Left ventricle myocardium inferior (tissue), 1 donor: ENCODE measurements at regions of chr11 and their contacts with region 1.

Region 1: DNA sequence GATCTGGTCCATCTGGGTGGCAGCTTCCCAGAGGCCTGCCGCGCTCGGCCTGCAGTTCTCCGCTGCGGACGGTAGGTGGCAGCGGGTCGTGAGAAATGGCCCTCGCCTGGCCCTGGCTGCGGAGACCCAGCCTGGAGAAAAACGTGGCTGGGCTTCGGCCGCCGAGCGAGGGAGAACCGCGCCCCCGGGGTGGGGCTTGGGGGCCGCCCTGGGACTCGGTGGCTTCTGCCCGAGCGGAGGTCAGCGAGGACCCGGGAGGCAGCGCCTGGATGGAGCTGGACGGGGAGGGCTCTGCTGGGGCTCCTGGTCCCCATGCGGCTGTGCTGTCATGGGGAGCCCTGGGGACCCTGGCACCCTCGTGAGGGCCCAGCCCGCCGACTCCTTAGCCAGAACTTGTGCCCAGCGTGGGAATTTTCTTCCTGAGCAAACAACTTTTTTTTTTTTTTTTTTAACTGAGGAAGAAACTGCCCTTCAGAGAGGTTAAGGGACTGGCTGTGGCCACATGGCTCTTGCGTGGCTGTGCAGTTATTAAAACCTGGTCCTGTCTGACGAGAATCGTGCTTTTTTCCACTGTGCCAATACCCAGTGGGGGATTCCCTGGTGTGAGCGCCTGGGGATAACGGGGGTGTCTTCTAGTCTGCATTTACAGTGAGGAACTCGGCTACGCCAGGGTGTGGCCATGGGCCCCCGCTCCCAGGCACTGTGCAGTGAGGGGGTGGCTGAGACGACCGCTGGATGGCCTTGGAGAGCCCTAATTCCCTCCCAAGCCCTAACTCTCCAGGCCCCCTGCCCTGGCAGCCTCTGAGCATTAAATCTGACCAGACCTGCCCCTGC is 535.6 kb downstream of the INSC start:
- DNase-seq: peak; percentile 96
- H3K4me3 ChIP-seq: peak overlapping the region; percentile 62
- H3K27ac ChIP-seq: peak overlapping the region; percentile 84
- H3K4me1 ChIP-seq: peaks cover 20% of the 10 kb centered on the region
- H3K27me3 ChIP-seq: no peaks in the 10 kb centered on the region
- CTCF ChIP-seq: peak; percentile 99

Region 2: GRCh38 chr11:15569305-15570025 is 80.9 kb before region 1 on chr11:
- intact Hi-C with region 1: no loop called
- DNase-seq: peak; percentile 32
- H3K4me3 ChIP-seq: no peak overlapping the region
- H3K27ac ChIP-seq: peak overlapping the region; percentile 82
- H3K4me1 ChIP-seq: peaks cover 27% of the 10 kb centered on the region
- H3K27me3 ChIP-seq: no peaks in the 10 kb centered on the region
- CTCF ChIP-seq: no peak

Region 3: DNA sequence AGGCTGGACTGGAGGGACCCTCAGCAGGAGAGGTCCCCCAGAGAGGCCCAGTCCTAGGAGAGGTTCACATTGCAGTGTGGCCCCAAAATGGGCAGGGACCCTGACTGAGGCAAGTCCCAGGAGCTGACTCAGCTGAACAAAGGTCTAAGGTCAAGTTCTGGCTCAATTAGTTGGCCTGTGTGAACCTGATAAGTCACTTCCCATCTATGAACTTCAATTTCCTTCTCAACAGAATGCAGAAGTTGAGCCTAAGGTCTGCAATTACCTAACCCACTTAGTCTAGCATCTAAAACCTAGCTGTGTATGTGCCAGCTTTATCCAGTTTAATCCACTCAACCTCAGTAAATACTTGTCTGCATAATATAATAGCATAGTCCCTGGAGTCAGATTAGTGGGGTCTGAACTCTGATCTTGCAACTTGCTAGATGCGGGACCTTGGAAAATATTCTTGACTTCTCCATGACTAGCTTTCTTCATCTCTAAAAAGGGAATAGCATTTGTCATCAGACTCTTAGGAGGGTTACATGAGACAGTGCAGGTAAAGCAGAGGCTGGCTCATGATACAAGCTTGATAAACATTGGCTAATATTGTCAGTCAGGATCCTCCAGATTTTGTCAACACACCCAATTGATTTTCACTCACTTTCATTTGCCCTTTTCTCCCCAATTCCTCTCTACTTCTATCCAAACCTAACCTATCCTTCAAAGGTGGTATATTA is 70.1 kb before region 1 on chr11:
- intact Hi-C with region 1: no loop called
- DNase-seq: no peak
- H3K4me3 ChIP-seq: no peak overlapping the region
- H3K27ac ChIP-seq: no peak overlapping the region
- H3K4me1 ChIP-seq: peaks cover 12% of the 10 kb centered on the region
- H3K27me3 ChIP-seq: no peaks in the 10 kb centered on the region
- CTCF ChIP-seq: no peak

Region 4: DNA sequence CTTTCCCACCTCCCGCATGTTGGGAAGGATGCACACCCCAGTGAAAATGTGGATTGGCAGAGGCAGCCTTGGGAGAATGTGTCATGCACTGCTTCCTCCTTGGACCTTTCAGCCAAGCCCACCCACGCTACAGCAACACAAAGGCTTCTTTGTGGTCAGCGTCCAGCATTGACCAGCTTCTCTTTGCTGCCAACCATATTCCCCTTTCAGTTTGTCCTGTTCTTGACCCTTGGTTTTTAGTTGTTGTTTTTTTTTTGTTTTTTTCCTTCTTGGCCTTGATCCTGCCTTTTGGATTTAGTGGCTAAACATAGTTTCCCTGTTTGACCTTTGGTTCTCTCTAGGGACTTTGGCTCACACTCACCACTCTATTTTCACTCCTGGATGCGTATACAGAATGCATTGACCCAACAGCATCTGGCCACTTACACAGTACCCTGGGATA is 38.0 kb after region 1 on chr11:
- intact Hi-C with region 1: loop called (anchors 1 kb)
- DNase-seq: peak; percentile 69
- H3K4me3 ChIP-seq: no peak overlapping the region
- H3K27ac ChIP-seq: peak overlapping the region; percentile 64
- H3K4me1 ChIP-seq: peaks cover 17% of the 10 kb centered on the region
- H3K27me3 ChIP-seq: no peaks in the 10 kb centered on the region
- CTCF ChIP-seq: no peak

Region 5: DNA sequence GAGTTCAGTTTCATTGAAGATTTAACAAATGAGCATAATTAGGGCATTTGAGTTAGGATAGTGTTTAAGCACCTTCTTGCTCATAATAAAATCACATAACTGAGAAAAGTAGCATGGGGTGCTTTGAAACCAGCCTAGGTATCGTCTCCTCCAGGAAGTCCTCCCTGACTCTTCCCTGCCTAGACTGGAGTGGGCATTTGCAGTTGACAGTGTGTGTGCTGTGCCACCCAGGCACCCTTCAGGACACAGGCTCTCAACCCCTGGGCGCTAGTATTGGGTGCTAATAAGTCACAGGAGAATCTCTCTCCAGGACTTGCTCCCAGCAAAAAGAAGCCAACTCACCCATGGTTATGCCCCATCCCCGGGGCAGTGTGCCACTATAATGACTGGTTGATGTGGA is 48.5 kb after region 1 on chr11:
- intact Hi-C with region 1: no loop called
- DNase-seq: no peak
- H3K4me3 ChIP-seq: no peak overlapping the region
- H3K27ac ChIP-seq: no peak overlapping the region
- H3K4me1 ChIP-seq: no peaks in the 10 kb centered on the region
- H3K27me3 ChIP-seq: no peaks in the 10 kb centered on the region
- CTCF ChIP-seq: no peak

Region 6: GRCh38 chr11:16052750-16053149 is 402.4 kb after region 1 on chr11:
- intact Hi-C with region 1: no loop called
- DNase-seq: no peak
- H3K4me3 ChIP-seq: no peak overlapping the region
- H3K27ac ChIP-seq: no peak overlapping the region
- H3K4me1 ChIP-seq: no peaks in the 10 kb centered on the region
- H3K27me3 ChIP-seq: no peaks in the 10 kb centered on the region
- CTCF ChIP-seq: no peak

Region 7: GRCh38 chr11:16605894-16606783 is 955.8 kb after region 1 on chr11:
- intact Hi-C with region 1: loop called (anchors 10 kb)
- DNase-seq: peak; percentile 93
- H3K4me3 ChIP-seq: peak overlapping the region; percentile 83
- H3K27ac ChIP-seq: peak overlapping the region; percentile 97
- H3K4me1 ChIP-seq: peaks cover 66% of the 10 kb centered on the region
- H3K27me3 ChIP-seq: peaks cover 58% of the 10 kb centered on the region
- CTCF ChIP-seq: peak; percentile 99